ENCODE measurements at regions of chr19 and their contacts with region 1.

Region 1: DNA sequence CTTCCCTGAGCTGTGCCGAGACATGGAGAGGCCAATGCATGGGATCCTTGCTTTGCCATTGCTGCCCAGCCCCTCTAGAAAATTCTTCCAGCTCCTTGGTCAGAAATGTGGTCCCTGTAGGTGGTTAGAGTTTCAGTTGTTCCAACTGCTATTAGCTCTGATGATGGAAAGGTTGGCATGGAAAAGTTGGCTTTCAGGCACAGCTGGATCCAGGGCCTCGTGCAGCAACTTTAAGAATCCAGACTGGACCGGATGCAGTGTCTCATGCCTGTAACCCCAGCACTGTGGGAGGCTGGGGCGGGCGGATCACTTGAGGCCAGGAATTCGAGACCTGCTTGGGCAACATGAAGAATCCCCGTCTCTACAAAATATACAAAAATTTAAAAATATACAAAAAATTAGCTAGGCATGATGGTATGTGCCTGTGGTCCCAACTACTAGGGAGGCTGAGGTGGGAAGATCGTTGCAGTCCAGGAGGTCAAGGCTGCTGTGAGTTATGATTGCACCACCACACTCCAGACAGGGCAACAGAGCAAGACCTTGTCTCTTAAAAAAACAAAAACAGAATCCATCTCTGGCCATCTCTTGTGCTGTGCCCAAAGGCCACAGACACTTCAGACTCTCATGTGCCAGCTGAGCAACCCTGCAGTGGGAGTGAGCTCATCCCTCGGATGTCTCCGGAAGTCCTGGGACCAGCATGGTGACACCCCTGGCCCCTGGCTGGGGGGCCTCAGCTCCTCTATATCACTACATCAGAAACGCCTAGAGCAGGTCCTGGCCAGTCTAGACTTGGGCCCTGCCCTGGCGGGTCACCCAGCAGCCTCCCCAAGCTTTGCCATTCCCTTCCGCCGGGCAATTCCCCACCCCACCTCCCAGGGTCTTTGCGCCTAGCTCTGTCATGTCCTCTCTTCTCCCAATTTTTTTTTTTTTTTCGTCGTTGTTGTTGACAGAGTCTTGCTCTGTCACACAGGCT is 16.8 kb downstream of the MEX3D start:
- DNase-seq: no peak
- ATAC-seq: no peak
- H3K4me3 ChIP-seq: no peak overlapping the region
- H3K27ac ChIP-seq: no peak overlapping the region
- H3K4me1 ChIP-seq: no peaks in the 10 kb centered on the region
- H3K27me3 ChIP-seq: no peaks in the 10 kb centered on the region

Region 2: GRCh38 chr19:1429750-1430149 is 121.6 kb before region 1 on chr19:
- intact Hi-C with region 1: no loop called
- DNase-seq: no peak
- ATAC-seq: no peak
- H3K4me3 ChIP-seq: no peak overlapping the region
- H3K27ac ChIP-seq: no peak overlapping the region
- H3K4me1 ChIP-seq: no peaks in the 10 kb centered on the region
- H3K27me3 ChIP-seq: no peaks in the 10 kb centered on the region

Region 3: GRCh38 chr19:1672038-1672768 is 120.8 kb after region 1 on chr19:
- intact Hi-C with region 1: loop called (anchors 5 kb)
- DNase-seq: peak in 1 of 2 donors; percentile 86
- ATAC-seq: peak; percentile 69
- H3K4me3 ChIP-seq: no peak overlapping the region
- H3K27ac ChIP-seq: no peak overlapping the region
- H3K4me1 ChIP-seq: no peaks in the 10 kb centered on the region
- H3K27me3 ChIP-seq: peaks cover 0 to 1% of the 10 kb centered on the region in 2 donors

Region 4: DNA sequence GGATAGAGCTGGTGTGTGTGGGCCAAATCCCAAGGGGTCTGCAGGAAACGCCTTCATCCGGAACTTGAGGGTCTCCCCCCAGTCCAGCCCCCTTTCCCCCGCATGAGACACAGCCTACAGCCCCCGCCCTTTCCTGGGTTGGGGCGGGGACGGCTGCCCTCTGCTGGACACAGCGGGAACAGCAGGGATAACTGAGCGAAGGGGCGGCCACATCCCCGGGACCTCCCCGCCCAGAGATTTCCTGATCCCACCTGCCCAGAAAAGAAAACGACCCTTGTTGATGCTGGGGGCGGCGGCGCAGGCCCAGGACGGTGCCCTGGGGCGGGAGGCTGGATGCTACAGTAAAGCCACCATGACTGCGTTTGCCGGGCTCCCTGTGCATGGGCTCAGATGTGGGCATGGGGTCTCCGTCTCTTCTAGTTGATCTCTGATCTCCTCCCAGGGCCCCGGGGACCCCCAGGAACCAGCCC is 216.1 kb after region 1 on chr19:
- intact Hi-C with region 1: loop called in 1 of 2 experiments (anchors 1 kb)
- DNase-seq: no peak
- ATAC-seq: peak; percentile 82
- H3K4me3 ChIP-seq: no peak overlapping the region
- H3K27ac ChIP-seq: no peak overlapping the region
- H3K4me1 ChIP-seq: no peaks in the 10 kb centered on the region
- H3K27me3 ChIP-seq: no peaks in the 10 kb centered on the region

Measured in aorta (tissue), 5 donors.